Motor neuron (in vitro differentiated cells): ENCODE measurements at regions of chr4 and their contacts with region 1.

Region 1: GRCh38 chr4:150242820-150243458 is 164.7 kb downstream of the DCLK2 start:
- ATAC-seq: peak in 6 of 8 experiments; percentile 25 to 73 (median 46)
- H3K4me3 ChIP-seq: no peak overlapping the region
- H3K27ac ChIP-seq: no peak overlapping the region
- H3K4me1 ChIP-seq: no peaks in the 10 kb centered on the region

Region 2: DNA sequence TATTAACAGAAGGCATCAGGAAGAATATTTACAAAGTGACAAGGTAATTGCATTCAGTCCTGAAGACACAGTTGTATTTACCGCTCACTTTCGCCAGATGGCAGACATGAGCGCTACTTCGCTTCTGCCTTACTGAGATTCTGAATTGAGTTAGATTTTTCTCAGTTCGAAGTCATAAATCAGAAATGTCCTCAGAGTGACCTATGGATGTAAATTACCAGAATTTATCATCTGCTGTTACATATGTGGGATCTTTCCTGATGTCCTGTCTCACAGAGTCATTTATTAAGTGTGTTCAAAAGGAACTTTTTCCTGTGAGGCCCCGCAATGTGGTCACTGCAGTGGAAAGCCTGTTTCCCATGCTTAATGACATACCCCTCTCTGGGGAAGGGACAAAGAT is 262.0 kb before region 1 on chr4:
- in situ Hi-C with region 1: loop called in 2 of 9 experiments (anchors 25 kb)
- ATAC-seq: peak; percentile 74 to 97 (median 83)
- H3K4me3 ChIP-seq: no peak overlapping the region
- H3K27ac ChIP-seq: no peak overlapping the region
- H3K4me1 ChIP-seq: peaks cover 0 to 11% of the 10 kb centered on the region in 2 donors

Region 3: GRCh38 chr4:150010525-150011126 is 232.3 kb before region 1 on chr4:
- in situ Hi-C with region 1: loop called in 2 of 9 experiments (anchors 25 kb)
- ATAC-seq: peak; percentile 44 to 97 (median 80)
- H3K4me3 ChIP-seq: no peak overlapping the region
- H3K27ac ChIP-seq: no peak overlapping the region
- H3K4me1 ChIP-seq: peaks cover 0 to under 1% of the 10 kb centered on the region in 2 donors